ENCODE measurements at regions of chr2 and their contacts with region 1.

Region 1: GRCh38 chr2:224284134-224284946 is 117.6 kb downstream of the FAM124B start:
- DNase-seq: no peak

Region 2: DNA sequence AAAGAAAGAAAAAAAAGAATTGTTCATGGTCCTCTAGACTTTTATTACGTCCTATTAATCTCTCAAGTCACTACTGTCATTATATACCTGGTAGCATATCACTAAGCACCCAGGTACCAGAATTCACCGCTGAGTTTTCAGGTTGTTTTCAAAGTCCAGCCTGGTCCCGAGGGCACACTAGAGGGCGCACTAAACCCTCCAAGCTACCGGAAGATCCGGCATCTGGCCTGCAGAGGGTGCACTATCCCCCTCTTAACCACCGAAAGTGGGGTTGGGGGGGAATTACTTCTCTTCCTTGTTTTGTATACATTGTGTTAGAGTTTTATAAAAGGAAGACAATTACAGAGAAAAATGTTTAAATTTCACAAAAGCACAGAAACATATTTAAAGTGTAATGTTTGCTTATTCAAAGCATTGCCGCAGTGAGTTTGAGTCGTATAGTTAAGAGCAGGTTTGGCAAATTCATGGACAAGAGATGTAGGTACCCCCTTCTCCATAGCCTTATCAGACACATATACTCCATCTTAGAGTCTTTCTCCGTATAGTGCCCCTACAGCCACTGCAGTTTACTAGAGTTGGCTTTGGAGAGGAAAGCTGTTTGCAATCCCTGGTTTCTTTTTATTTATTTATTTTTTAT is 1593.7 kb before region 1 on chr2:
- intact Hi-C with region 1: no loop called
- DNase-seq: peak; percentile 90

Region 3: GRCh38 chr2:223692191-223692947 is 592.0 kb before region 1 on chr2:
- intact Hi-C with region 1: no loop called
- DNase-seq: no peak

Region 4: GRCh38 chr2:223993621-223994232 is 290.6 kb before region 1 on chr2:
- intact Hi-C with region 1: loop called (anchors 2 to 5 kb)
- DNase-seq: no peak